Activated T-helper 2 cell treated with anti-CD3 and anti-CD28 coated beads, Interferon-gamma antibody, Interleukin-2, Interleukin-4, amounts not matched to agents 10 μg/mL and 5 μg/mL and 100 μg/mL, durations not matched to agents 14 hours and 24 hours and 36 hours (primary cell): ENCODE measurements at regions of chr5 and their contacts with region 1.

Region 1: DNA sequence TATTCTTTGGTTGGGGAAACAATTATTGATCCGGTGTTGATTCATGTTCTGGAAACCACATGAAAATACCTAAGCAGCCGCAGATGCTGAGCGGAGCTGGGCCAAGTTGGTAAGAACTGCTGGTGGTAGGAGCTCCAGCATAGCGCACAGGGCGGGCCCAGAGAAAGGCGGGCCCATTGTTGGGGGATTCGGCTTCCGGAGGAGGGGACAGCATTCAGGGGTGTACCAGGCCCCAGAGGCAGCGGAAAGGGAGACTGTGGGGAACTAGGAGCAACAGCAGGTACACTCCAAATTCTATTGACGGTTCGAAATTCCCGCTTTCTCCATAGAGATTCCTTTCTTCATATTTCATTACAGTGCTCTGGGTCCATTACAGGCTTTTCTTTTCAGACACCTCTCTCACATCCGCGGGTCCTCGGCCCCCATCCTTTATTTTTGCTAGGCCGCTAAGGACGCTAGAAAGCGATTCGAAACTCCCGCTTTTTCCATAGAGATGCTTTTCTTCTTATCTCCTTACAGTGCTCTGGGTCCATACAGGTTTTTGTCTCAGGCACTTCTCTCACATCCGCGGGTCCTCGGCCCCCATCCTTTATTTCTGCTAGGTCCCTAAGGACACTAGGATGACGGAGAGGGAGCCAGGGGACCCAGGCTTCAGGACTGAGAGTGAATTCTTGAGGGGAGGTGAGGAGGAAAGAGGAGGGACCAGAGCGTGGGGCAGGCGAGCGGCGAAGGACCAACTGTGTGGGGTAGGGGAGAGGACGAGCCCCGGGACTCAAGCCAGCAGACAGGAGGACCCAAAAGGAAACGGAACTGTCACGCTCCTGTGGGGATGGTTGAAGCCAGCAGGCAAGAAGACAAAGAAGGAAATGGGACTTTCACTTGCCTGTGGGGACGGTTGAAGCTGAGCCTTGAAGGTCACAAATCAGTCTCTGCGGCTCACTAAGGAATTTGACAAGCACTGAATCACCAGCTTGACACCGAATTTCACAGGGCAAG is at the start of gene CCDC152:
- DNase-seq: peak; percentile 32
- H3K4me3 Mint-ChIP-seq: peak within 1 kb of the TSS; percentile 81
- H3K27ac Mint-ChIP-seq: peak within 1 kb of the TSS; percentile 31
- H3K4me1 Mint-ChIP-seq: peaks cover 16% of the 10 kb centered on the region
- H3K27me3 Mint-ChIP-seq: peaks cover 14% of the 10 kb centered on the region
- total RNA-seq, gene CCDC152: 5.5 and 6.0 TPM in 2 replicates

Region 2: GRCh38 chr5:42718591-42718990 is 38.3 kb before region 1 on chr5:
- intact Hi-C with region 1: loop called (anchors 2 kb)
- DNase-seq: peak; percentile 38
- H3K4me3 Mint-ChIP-seq: peak overlapping the region; percentile 19
- H3K27ac Mint-ChIP-seq: no peak overlapping the region
- H3K4me1 Mint-ChIP-seq: peaks cover 42% of the 10 kb centered on the region
- H3K27me3 Mint-ChIP-seq: peaks cover 36% of the 10 kb centered on the region

Region 3: GRCh38 chr5:42889311-42889933 is 132.5 kb after region 1 on chr5:
- intact Hi-C with region 1: loop called (anchors 5 kb)
- DNase-seq: peak; percentile 49
- H3K4me3 Mint-ChIP-seq: no peak overlapping the region
- H3K27ac Mint-ChIP-seq: no peak overlapping the region
- H3K4me1 Mint-ChIP-seq: peaks cover 1% of the 10 kb centered on the region
- H3K27me3 Mint-ChIP-seq: peaks cover 26% of the 10 kb centered on the region

Region 4: GRCh38 chr5:43281840-43282658 is 525.1 kb after region 1 on chr5:
- intact Hi-C with region 1: no loop called
- DNase-seq: no peak
- H3K4me3 Mint-ChIP-seq: no peak overlapping the region
- H3K27ac Mint-ChIP-seq: no peak overlapping the region
- H3K4me1 Mint-ChIP-seq: peaks cover 7% of the 10 kb centered on the region
- H3K27me3 Mint-ChIP-seq: no peaks in the 10 kb centered on the region